OCI-LY7 (cell line): ENCODE measurements at regions of chr6 and their contacts with region 1.

Region 1: GRCh38 chr6:45922728-45923351 is 92.8 kb downstream of the CLIC5 start:
- DNase-seq: peak; percentile 39
- H3K4me3 ChIP-seq: no peak overlapping the region
- H3K27ac ChIP-seq: no peak overlapping the region
- H3K4me1 ChIP-seq: no peaks in the 10 kb centered on the region
- CTCF ChIP-seq: peak; percentile 81

Region 2: DNA sequence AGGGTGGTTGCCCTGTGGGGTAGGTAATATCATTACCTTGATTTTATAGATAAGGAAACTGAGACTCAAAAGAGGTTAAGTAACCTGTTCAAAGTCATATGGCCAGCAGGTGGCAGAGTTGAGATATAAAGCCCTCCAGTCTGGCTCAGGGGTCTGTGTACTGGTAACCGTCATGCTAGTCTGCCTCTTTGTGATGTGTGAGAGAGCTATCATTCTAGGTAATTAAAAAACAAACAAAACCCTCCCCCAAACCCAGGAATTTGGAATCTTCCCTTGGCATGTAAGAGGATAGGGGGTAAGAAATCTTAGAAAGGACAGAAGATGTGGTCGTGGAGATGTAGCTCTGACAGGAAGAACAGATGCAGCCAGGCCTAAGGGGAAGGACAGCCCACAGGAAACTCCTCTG is 1329.3 kb before region 1 on chr6:
- CTCF ChIA-PET with region 1: no interaction called
- POLR2A ChIA-PET with region 1: no interaction called
- intact Hi-C with region 1: loop called (anchors 5 kb)
- DNase-seq: peak; percentile 73
- H3K4me3 ChIP-seq: no peak overlapping the region
- H3K27ac ChIP-seq: no peak overlapping the region
- H3K4me1 ChIP-seq: no peaks in the 10 kb centered on the region
- CTCF ChIP-seq: peak; percentile 88

Region 3: DNA sequence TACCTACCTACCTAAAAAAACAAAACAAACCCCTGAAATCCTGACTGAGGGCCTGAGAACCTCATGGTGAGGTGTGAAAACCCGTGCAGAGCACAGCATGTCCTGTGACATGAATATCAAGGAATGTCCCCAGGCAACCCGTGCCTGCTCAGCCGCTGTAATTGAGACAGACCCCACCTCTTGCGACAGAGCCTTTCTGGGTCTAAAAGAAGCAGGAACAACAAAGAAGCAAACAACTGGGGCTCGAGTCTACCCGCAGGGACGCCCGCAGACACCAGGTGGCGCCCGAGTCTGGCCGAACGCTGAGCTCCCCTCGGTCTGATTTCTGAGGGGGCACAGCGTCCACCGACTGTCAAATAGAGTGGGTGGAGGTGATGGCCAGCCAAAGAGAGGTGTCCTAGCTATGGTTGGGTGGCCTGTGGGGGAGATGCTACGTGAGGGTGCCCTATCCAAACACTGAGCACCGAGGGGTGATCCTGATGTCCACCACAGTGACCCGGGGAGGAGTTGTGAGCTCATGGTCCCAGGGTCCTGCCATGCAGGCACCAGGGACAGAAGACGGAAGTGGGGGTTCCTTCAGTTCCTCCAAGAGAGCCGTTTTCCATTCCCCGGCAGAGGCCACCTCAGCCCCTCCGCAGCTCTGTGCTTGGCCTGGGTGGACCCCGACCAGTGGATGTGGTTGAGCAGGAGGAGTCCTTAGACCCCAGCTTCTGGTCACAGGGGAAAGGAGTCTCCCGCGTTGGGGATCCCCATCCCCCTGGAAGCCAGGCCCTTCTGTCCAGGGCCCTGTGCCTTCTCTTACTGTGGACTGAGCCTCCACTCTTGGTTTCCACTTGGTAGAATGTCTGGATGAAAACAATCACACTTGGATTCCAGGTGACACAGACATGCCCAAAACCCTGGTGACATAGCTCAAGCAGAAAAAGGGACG is 1267.2 kb before region 1 on chr6:
- CTCF ChIA-PET with region 1: no interaction called
- POLR2A ChIA-PET with region 1: no interaction called
- intact Hi-C with region 1: loop called (anchors 1 kb)
- DNase-seq: peak; percentile 36
- H3K4me3 ChIP-seq: no peak overlapping the region
- H3K27ac ChIP-seq: no peak overlapping the region
- H3K4me1 ChIP-seq: no peaks in the 10 kb centered on the region
- CTCF ChIP-seq: peak; percentile 93

Region 4: DNA sequence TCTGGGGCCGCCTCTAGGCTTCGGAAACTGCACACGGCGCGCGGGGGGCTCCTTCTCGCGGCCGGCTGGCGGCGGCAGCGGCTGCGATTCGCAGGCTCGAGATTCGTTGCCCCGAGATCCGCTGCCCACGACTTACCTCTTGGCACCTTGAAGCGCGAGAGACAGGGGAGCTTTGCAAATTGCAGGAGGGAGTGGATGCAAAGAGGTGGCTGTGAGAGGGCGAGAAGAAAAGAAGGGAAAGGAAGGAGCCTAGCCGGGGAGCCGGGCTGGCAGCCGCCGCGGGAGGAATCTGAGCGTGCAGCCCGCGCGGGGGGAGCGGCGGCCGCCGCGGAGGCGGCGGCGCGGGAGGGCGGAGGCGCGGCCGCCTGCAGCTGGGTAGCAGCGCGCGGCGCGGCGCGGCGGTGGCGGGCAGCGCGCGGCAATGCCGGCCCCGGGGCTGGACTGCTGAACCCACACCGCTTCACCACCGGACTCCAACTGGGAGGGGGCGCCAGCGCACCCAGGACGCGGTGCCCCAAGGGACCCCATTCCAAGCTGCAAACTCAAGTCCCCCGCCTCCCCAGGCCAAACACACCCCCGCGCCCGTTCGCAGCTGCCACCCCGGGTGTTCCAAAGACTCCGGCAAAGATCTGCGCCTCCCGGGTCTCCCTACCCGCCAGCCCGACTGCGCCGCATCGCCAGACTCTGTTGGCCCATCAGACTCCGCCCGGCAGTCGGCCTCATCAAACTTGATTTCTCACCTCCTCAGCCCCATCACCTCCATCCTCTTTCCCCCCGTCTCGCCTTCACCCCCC is 500.9 kb before region 1 on chr6:
- CTCF ChIA-PET with region 1: no interaction called
- POLR2A ChIA-PET with region 1: no interaction called
- intact Hi-C with region 1: loop called (anchors 10 kb)
- DNase-seq: peak; percentile 20
- H3K4me3 ChIP-seq: peak overlapping the region; percentile 52
- H3K27ac ChIP-seq: no peak overlapping the region
- H3K4me1 ChIP-seq: peaks cover 34% of the 10 kb centered on the region
- CTCF ChIP-seq: 0 out of 2 replicates have a peak, but pooled peaks have one; percentile 16

Region 5: DNA sequence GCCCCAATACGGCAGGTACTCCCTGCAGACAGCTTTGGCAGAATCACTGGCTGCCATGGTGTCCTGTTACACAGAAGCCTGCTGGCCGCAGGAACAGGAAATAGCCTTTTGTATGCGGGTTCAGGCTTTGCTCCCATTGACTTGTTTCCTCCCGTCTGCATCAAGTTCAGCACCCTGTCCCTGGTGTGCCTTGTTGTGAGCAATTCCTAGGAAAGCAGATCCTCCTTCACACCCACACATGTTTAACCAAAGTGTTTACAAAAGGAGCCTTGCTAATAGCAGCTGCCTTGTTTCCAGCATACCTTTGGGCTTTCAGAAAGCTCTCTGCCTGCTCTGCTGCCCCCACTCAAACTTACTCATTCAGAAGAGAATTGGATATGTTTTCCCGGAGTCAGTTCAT is 417.9 kb before region 1 on chr6:
- CTCF ChIA-PET with region 1: no interaction called
- POLR2A ChIA-PET with region 1: no interaction called
- intact Hi-C with region 1: loop called (anchors 10 kb)
- DNase-seq: no peak
- H3K4me3 ChIP-seq: no peak overlapping the region
- H3K27ac ChIP-seq: no peak overlapping the region
- H3K4me1 ChIP-seq: no peaks in the 10 kb centered on the region
- CTCF ChIP-seq: no peak

Region 6: GRCh38 chr6:45714741-45715507 is 207.9 kb before region 1 on chr6:
- CTCF ChIA-PET with region 1: no interaction called
- POLR2A ChIA-PET with region 1: no interaction called
- intact Hi-C with region 1: loop called (anchors 10 kb)
- DNase-seq: peak; percentile 75
- H3K4me3 ChIP-seq: no peak overlapping the region
- H3K27ac ChIP-seq: no peak overlapping the region
- H3K4me1 ChIP-seq: peaks cover 3% of the 10 kb centered on the region
- CTCF ChIP-seq: peak; percentile 86

Region 7: DNA sequence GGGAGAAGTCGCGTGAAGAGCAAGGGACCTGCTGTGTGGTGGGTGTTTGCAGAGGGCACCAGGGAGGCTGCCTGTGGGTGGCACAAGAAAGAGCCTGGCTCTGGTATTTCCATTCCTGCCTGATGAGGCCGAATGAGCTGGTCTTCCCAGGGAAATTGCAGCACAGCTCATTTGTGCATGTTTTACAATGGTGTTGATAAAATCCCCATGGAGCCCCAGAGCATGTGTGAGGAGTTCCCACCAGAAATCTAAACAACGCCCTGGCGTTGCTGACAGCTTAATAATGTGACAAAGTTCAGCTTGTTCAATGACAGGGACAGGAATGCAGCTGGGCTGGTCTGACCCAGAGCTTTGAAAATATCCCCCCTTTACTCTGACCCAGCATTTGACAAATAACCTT is 42.7 kb before region 1 on chr6:
- CTCF ChIA-PET with region 1: no interaction called
- POLR2A ChIA-PET with region 1: no interaction called
- intact Hi-C with region 1: no loop called
- DNase-seq: no peak
- H3K4me3 ChIP-seq: no peak overlapping the region
- H3K27ac ChIP-seq: no peak overlapping the region
- H3K4me1 ChIP-seq: no peaks in the 10 kb centered on the region
- CTCF ChIP-seq: no peak

Region 8: GRCh38 chr6:45911691-45912090 is 11.1 kb before region 1 on chr6:
- CTCF ChIA-PET with region 1: no interaction called
- POLR2A ChIA-PET with region 1: no interaction called
- intact Hi-C with region 1: no loop called
- DNase-seq: no peak
- H3K4me3 ChIP-seq: no peak overlapping the region
- H3K27ac ChIP-seq: no peak overlapping the region
- H3K4me1 ChIP-seq: no peaks in the 10 kb centered on the region
- CTCF ChIP-seq: no peak

Region 9: GRCh38 chr6:45983062-45983616 is 60.3 kb after region 1 on chr6:
- CTCF ChIA-PET with region 1: no interaction called
- POLR2A ChIA-PET with region 1: no interaction called
- intact Hi-C with region 1: no loop called
- DNase-seq: no peak
- H3K4me3 ChIP-seq: no peak overlapping the region
- H3K27ac ChIP-seq: no peak overlapping the region
- H3K4me1 ChIP-seq: no peaks in the 10 kb centered on the region
- CTCF ChIP-seq: no peak

Region 10: DNA sequence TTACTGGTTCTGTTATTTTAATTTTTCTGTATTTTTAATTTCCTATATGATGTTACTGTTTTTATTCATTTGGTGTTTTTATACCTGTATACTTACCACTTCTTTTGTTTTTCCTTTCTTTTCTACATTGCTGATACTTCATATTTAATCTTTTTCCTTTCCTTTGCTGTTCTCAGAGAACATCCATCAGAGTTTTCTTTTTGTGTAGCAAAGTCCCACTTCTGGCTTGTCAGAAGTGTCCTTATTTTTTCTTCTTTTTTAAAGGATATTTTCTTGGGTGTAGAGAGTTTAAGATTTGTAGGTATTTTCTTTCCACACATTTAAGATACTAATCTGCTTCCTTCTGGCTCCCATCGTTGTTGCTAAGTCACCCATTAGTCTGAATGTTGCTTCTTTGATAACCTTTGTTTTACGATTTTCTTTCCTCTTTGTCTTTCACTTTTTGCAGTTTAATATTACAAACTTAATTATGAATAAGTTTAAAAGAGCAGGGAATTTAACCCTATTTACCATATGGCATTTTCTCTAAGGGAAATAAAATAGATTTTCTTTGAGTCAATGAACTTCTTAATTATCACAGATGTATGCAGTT is 1573.2 kb after region 1 on chr6:
- CTCF ChIA-PET with region 1: no interaction called
- POLR2A ChIA-PET with region 1: no interaction called
- intact Hi-C with region 1: no loop called
- DNase-seq: no peak
- H3K4me3 ChIP-seq: no peak overlapping the region
- H3K27ac ChIP-seq: no peak overlapping the region
- H3K4me1 ChIP-seq: peaks cover 9% of the 10 kb centered on the region
- CTCF ChIP-seq: no peak